IMR-90 (cell line): ENCODE measurements at regions of chr14 and their contacts with region 1.

Region 1: GRCh38 chr14:93299416-93299815 is 33.4 kb downstream of the BTBD7 start:
- DNase-seq: no peak
- ATAC-seq: no peak
- H3K4me3 ChIP-seq: no peak overlapping the region
- H3K27ac ChIP-seq: no peak overlapping the region
- H3K4me1 ChIP-seq: peaks cover 12% of the 10 kb centered on the region
- H3K27me3 ChIP-seq: no peaks in the 10 kb centered on the region
- CTCF ChIP-seq: no peak
- POLR2A ChIP-seq: no peak
- RAD21 ChIP-seq: no peak

Region 2: GRCh38 chr14:93150227-93151206 is 148.9 kb before region 1 on chr14:
- CTCF ChIA-PET with region 1: no interaction called
- POLR2A ChIA-PET with region 1: no interaction called
- dilution Hi-C with region 1: no loop called
- in situ Hi-C with region 1: no loop called
- intact Hi-C with region 1: no loop called
- DNase-seq: no peak
- ATAC-seq: peak; percentile 49
- H3K4me3 ChIP-seq: no peak overlapping the region
- H3K27ac ChIP-seq: no peak overlapping the region
- H3K4me1 ChIP-seq: no peaks in the 10 kb centered on the region
- H3K27me3 ChIP-seq: peaks cover 4% of the 10 kb centered on the region; the same call in 1 of the 2 replicates
- CTCF ChIP-seq: no peak
- POLR2A ChIP-seq: no peak
- RAD21 ChIP-seq: no peak

Region 3: GRCh38 chr14:93281937-93282336 is 17.5 kb before region 1 on chr14:
- CTCF ChIA-PET with region 1: no interaction called
- POLR2A ChIA-PET with region 1: no interaction called
- dilution Hi-C with region 1: no loop called
- in situ Hi-C with region 1: no loop called
- intact Hi-C with region 1: loop called (anchors 2 kb)
- DNase-seq: peak; percentile 54
- ATAC-seq: peak; percentile 25
- H3K4me3 ChIP-seq: no peak overlapping the region
- H3K27ac ChIP-seq: no peak overlapping the region
- H3K4me1 ChIP-seq: peaks cover 4% of the 10 kb centered on the region; the same call in 1 of the 2 replicates
- H3K27me3 ChIP-seq: no peaks in the 10 kb centered on the region
- CTCF ChIP-seq: no peak
- POLR2A ChIP-seq: no peak
- RAD21 ChIP-seq: no peak